ENCODE measurements at regions of chr1 and their contacts with region 1.

Region 1: GRCh38 chr1:66242646-66243547 is 291.1 kb upstream of the SGIP1 start:
- DNase-seq: peak; percentile 94
- H3K4me3 ChIP-seq: no peak overlapping the region
- H3K27ac ChIP-seq: no peak overlapping the region
- H3K4me1 ChIP-seq: peaks cover 0 to 18% (median 2%) of the 10 kb centered on the region in 4 donors
- H3K27me3 ChIP-seq: peaks cover 0 to 4% (median 0%) of the 10 kb centered on the region in 4 donors
- CTCF ChIP-seq: peak; percentile 95 to 98 (median 97)
- EP300 ChIP-seq: no peak
- POLR2A ChIP-seq: no peak

Region 2: GRCh38 chr1:65958561-65959350 is 284.1 kb before region 1 on chr1:
- intact Hi-C with region 1: loop called (anchors 1 kb)
- DNase-seq: no peak
- H3K4me3 ChIP-seq: no peak overlapping the region
- H3K27ac ChIP-seq: no peak overlapping the region
- H3K4me1 ChIP-seq: no peaks in the 10 kb centered on the region
- H3K27me3 ChIP-seq: no peaks in the 10 kb centered on the region
- CTCF ChIP-seq: peak; percentile 60 to 75 (median 68)
- EP300 ChIP-seq: no peak
- POLR2A ChIP-seq: no peak

Region 3: GRCh38 chr1:66197785-66198184 is 45.1 kb before region 1 on chr1:
- intact Hi-C with region 1: no loop called
- DNase-seq: no peak
- H3K4me3 ChIP-seq: no peak overlapping the region
- H3K27ac ChIP-seq: no peak overlapping the region
- H3K4me1 ChIP-seq: peaks cover 0 to 8% (median 3%) of the 10 kb centered on the region in 4 donors
- H3K27me3 ChIP-seq: no peaks in the 10 kb centered on the region
- CTCF ChIP-seq: no peak
- EP300 ChIP-seq: no peak
- POLR2A ChIP-seq: no peak

Region 4: DNA sequence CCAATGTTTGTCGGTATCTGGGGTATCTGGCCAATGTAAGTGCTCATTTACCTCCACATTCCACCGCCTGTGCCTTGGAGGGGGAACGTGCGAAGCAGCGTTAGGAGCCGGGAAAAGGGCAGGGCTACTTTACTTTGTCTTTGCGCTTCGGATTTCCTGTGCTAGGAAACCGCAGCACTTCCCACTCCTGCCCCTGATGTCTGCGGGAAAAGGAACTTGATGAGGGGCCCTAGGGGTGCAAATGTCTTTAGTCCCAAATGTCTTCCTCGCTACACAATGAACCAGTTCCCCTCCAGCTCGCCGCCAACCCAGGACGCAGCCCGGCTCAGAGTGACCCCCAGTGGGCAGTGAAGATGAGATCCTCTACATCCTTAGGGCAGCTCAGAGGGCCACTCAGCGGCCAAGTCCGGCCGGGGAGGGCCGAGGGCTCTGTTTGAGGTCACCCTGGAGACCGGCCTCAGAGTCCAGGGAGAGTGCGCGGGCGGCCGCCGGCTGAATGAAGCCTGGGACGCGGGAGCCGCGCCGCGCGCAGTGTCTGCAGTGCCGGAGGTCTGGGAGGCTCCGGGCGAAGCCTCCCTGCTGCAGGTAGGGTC is 509.2 kb after region 1 on chr1 and contains the start of gene DYNLT5:
- intact Hi-C with region 1: no loop called
- DNase-seq: no peak
- H3K4me3 ChIP-seq: peak within 1 kb of the TSS; percentile 48 to 58 (median 53)
- H3K27ac ChIP-seq: peak within 1 kb of the TSS in 2 of 4 donors; percentile 37 to 44
- H3K4me1 ChIP-seq: peaks cover 7 to 18% (median 14%) of the 10 kb centered on the region in 4 donors
- H3K27me3 ChIP-seq: peaks cover 0 to 6% (median 0%) of the 10 kb centered on the region in 4 donors
- CTCF ChIP-seq: peak in 2 of 3 experiments; percentile 4 to 9
- EP300 ChIP-seq: no peak
- POLR2A ChIP-seq: no peak
- total RNA-seq, gene DYNLT5: 1.2 to 3.1 (median 1.7) TPM

Measured in esophagus muscularis mucosa (tissue), 4 donors.